ENCODE measurements at regions of chr5 and their contacts with region 1.

Region 1: GRCh38 chr5:160269017-160269416 is 39.7 kb downstream of the FABP6 start:
- DNase-seq: peak; percentile 97

Region 2: GRCh38 chr5:160287378-160288051 is 18.5 kb after region 1 on chr5:
- intact Hi-C with region 1: loop called (anchors 2 kb)
- DNase-seq: peak; percentile 89

Region 3: GRCh38 chr5:160311491-160312133 is 42.6 kb after region 1 on chr5:
- intact Hi-C with region 1: loop called (anchors 1 kb)
- DNase-seq: no peak